ENCODE measurements at regions of chr3 and their contacts with region 1.

Region 1: GRCh38 chr3:125990253-125990970 is 21.4 kb downstream of the ROPN1B start:
- DNase-seq: peak; percentile 55 to 87 (median 72)
- ATAC-seq: peak; percentile 90 to 93
- H3K4me3 Mint-ChIP-seq: peak overlapping the region; percentile 92 to 100 (median 98)
- H3K27ac Mint-ChIP-seq: peak overlapping the region in 9 of 10 donors; percentile 96 to 100 (median 100)
- H3K4me1 Mint-ChIP-seq: peaks cover 10 to 22% (median 17%) of the 10 kb centered on the region in 4 donors
- H3K27me3 Mint-ChIP-seq: peaks cover 0 to 8% (median 0%) of the 10 kb centered on the region in 5 donors

Region 2: GRCh38 chr3:126083913-126084767 is 93.7 kb after region 1 on chr3 and contains the start of gene SLC41A3:
- POLR2A ChIA-PET with region 1: interaction called, 25 read pairs
- DNase-seq: peak; percentile 66 to 92 (median 79)
- ATAC-seq: peak; percentile 83 to 87
- H3K4me3 Mint-ChIP-seq: peak within 1 kb of the TSS; percentile 79 to 94 (median 91)
- H3K27ac Mint-ChIP-seq: peak within 1 kb of the TSS; percentile 89 to 98 (median 92)
- H3K4me1 Mint-ChIP-seq: peaks cover 14 to 29% (median 26%) of the 10 kb centered on the region in 4 donors
- H3K27me3 Mint-ChIP-seq: no peaks in the 10 kb centered on the region
- polyA plus RNA-seq, gene SLC41A3: 21.4 to 26.9 (median 24.3) TPM

Measured in naive thymus-derived CD8-positive, alpha-beta T cell (primary cell).